SK-MEL-5 (cell line): ENCODE measurements at regions of chr7 and their contacts with region 1.

Region 1: GRCh38 chr7:149599636-149600206 is 102.1 kb upstream of the ZNF746 start:
- DNase-seq: no peak

Region 2: GRCh38 chr7:149278396-149279045 is 321.2 kb before region 1 on chr7:
- in situ Hi-C with region 1: no loop called
- DNase-seq: no peak

Region 3: GRCh38 chr7:149532654-149533053 is 67.1 kb before region 1 on chr7:
- in situ Hi-C with region 1: loop called (anchors 10 kb)
- DNase-seq: no peak